ENCODE measurements at regions of chr9 and their contacts with region 1.

Region 1: GRCh38 chr9:2857564-2858198 is 13.8 kb upstream of the PUM3 start:
- DNase-seq: peak; percentile 66
- ATAC-seq: peak; percentile 97
- H3K4me3 ChIP-seq: no peak overlapping the region
- H3K27ac ChIP-seq: no peak overlapping the region
- H3K4me1 ChIP-seq: no peaks in the 10 kb centered on the region
- H3K27me3 ChIP-seq: peaks cover 13% of the 10 kb centered on the region
- CTCF ChIP-seq: peak; percentile 90
- POLR2A ChIP-seq: no peak
- RAD21 ChIP-seq: peak; percentile 77

Region 2: DNA sequence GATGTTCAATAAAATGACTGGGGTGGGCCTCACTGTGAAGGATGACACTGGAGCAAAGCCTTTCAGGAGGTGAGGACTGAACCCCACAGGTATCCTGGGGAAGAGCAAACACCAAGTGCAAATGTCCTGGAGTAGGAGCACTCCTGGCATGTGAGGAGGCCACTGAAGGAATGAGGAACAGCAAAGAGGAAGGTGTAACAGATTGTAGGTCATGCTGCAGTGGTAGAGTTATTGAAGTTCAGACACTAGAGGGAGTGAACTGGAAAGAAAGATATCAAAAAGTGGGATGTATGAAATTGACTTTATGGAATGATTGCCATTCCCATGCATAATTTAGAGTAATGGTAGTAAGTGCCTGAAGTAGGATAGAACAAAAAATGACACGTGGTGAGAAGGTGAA is 118.6 kb before region 1 on chr9:
- CTCF ChIA-PET with region 1: no interaction called
- POLR2A ChIA-PET with region 1: no interaction called
- dilution Hi-C with region 1: no loop called
- in situ Hi-C with region 1: no loop called
- intact Hi-C with region 1: no loop called
- DNase-seq: no peak
- ATAC-seq: no peak
- H3K4me3 ChIP-seq: no peak overlapping the region
- H3K27ac ChIP-seq: no peak overlapping the region
- H3K4me1 ChIP-seq: peaks cover 2% of the 10 kb centered on the region; the same call in 1 of the 2 replicates
- H3K27me3 ChIP-seq: no peaks in the 10 kb centered on the region
- CTCF ChIP-seq: no peak
- POLR2A ChIP-seq: no peak
- RAD21 ChIP-seq: no peak

Region 3: DNA sequence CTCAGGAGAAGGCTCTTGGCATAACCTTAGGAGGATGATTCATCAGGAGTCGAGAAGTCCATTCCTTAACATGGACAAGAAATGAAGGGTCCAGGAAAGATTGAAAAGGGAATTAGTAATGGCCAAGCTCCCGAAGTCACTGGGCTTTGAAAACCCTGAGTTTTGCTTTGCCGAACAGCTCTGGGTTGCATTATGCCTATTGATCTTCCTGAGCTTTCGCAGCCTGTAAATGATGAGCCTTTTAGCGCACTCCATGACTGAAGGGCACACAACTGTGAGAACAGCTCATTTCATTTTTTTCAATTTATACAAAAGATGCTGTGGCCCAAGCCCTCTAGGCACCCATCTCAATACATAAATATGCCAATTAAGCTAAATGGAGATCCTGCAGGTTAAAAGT is 11.2 kb after region 1 on chr9:
- CTCF ChIA-PET with region 1: interaction called, 10 read pairs
- POLR2A ChIA-PET with region 1: no interaction called
- dilution Hi-C with region 1: no loop called
- in situ Hi-C with region 1: no loop called
- intact Hi-C with region 1: no loop called
- DNase-seq: no peak
- ATAC-seq: no peak
- H3K4me3 ChIP-seq: no peak overlapping the region
- H3K27ac ChIP-seq: no peak overlapping the region
- H3K4me1 ChIP-seq: no peaks in the 10 kb centered on the region
- H3K27me3 ChIP-seq: peaks cover 39% of the 10 kb centered on the region
- CTCF ChIP-seq: no peak
- POLR2A ChIP-seq: no peak
- RAD21 ChIP-seq: no peak

Region 4: GRCh38 chr9:3136686-3137346 is 279.1 kb after region 1 on chr9:
- CTCF ChIA-PET with region 1: no interaction called
- POLR2A ChIA-PET with region 1: no interaction called
- dilution Hi-C with region 1: no loop called
- in situ Hi-C with region 1: no loop called
- intact Hi-C with region 1: no loop called
- DNase-seq: no peak
- ATAC-seq: no peak
- H3K4me3 ChIP-seq: no peak overlapping the region
- H3K27ac ChIP-seq: no peak overlapping the region
- H3K4me1 ChIP-seq: no peaks in the 10 kb centered on the region
- H3K27me3 ChIP-seq: no peaks in the 10 kb centered on the region
- CTCF ChIP-seq: no peak
- POLR2A ChIP-seq: no peak
- RAD21 ChIP-seq: no peak

Region 5: DNA sequence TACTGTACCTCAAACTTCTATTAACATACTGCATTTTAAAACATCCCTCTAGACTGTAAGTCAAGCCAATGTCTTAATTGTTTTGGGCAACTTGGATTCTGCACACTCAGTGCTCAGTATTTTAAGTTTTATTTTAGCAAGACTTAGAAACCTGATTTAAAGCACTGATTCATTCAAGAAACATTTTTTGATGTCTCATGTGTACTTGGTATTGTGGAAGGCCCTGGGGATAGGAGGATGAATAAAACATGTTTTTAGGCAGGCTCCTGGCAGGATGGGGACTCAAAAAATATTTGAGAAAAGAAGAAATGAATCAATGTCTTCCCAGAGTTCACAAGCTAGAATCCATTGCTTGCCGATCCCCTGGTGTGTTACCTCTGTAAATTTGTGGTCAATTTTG is 320.3 kb after region 1 on chr9:
- CTCF ChIA-PET with region 1: no interaction called
- POLR2A ChIA-PET with region 1: no interaction called
- dilution Hi-C with region 1: no loop called
- in situ Hi-C with region 1: no loop called
- intact Hi-C with region 1: loop called (anchors 5 kb)
- DNase-seq: no peak
- ATAC-seq: no peak
- H3K4me3 ChIP-seq: no peak overlapping the region
- H3K27ac ChIP-seq: no peak overlapping the region
- H3K4me1 ChIP-seq: no peaks in the 10 kb centered on the region
- H3K27me3 ChIP-seq: peaks cover 27% of the 10 kb centered on the region
- CTCF ChIP-seq: no peak
- POLR2A ChIP-seq: no peak
- RAD21 ChIP-seq: no peak

Region 6: DNA sequence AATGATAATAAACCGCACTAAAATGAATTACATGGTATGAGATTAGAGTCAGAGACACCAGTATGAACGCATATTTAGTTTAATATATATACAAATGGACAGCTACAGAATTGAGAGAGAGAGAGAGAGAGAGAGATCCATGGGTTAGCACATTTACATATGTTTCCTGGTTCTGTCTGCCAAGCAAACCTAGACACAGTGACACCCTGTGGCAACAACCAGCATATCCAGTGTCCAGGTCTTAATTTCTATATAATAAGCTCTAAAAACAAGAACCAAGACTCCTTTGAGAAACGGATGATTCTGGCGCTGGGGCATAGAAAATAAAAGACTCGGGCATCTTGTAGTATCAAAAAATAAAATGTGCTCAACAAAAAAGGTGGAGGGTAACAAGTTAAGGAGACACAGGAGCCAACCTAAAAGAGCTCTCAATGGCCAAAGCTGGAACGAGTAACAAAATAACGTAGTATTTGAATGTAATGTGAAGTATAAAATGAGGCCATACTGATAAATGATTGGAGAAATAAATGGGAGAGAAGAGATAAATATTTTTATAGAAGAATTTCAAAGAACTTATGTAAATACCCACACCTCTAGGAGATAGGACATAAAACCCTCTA is 583.6 kb after region 1 on chr9:
- CTCF ChIA-PET with region 1: interaction called, 3 read pairs
- POLR2A ChIA-PET with region 1: no interaction called
- dilution Hi-C with region 1: no loop called
- in situ Hi-C with region 1: loop called (anchors 10 kb)
- intact Hi-C with region 1: loop called (anchors 2 kb)
- DNase-seq: peak; percentile 77
- ATAC-seq: peak; percentile 91
- H3K4me3 ChIP-seq: no peak overlapping the region
- H3K27ac ChIP-seq: no peak overlapping the region
- H3K4me1 ChIP-seq: no peaks in the 10 kb centered on the region
- H3K27me3 ChIP-seq: no peaks in the 10 kb centered on the region
- CTCF ChIP-seq: peak; percentile 72
- POLR2A ChIP-seq: no peak
- RAD21 ChIP-seq: peak; percentile 73

Region 7: DNA sequence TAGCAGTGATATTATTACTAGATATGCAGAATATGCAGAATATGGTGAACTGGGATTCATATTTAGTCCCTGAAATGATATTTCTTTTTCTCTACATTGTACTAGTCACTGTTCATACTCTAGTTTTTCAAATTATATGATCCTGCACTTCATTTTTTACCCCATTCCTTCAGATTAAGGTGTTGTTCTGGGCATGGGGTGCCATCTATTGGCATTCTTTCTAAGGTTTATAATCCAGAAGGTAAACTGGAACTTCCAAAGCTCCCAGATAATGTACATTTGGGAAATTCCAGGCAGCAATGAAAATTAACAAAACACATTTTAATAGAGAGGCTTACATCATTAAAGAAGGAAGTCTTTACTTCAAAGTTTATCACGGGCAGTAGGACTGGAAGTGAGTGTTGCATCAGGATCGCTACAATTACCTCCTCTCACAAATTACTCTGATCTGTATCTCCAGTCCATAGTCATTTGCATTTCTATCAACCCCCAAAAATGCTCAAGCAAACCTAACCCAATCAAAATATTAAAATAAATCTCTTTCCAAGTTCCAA is 655.7 kb after region 1 on chr9:
- CTCF ChIA-PET with region 1: no interaction called
- POLR2A ChIA-PET with region 1: no interaction called
- dilution Hi-C with region 1: no loop called
- in situ Hi-C with region 1: no loop called
- intact Hi-C with region 1: loop called (anchors 5 kb)
- DNase-seq: no peak
- ATAC-seq: no peak
- H3K4me3 ChIP-seq: no peak overlapping the region
- H3K27ac ChIP-seq: no peak overlapping the region
- H3K4me1 ChIP-seq: peaks cover 4% of the 10 kb centered on the region; the same call in 1 of the 2 replicates
- H3K27me3 ChIP-seq: no peaks in the 10 kb centered on the region
- CTCF ChIP-seq: no peak
- POLR2A ChIP-seq: no peak
- RAD21 ChIP-seq: no peak

Region 8: GRCh38 chr9:4315582-4316215 is 1458.0 kb after region 1 on chr9:
- CTCF ChIA-PET with region 1: no interaction called
- POLR2A ChIA-PET with region 1: no interaction called
- dilution Hi-C with region 1: no loop called
- in situ Hi-C with region 1: no loop called
- intact Hi-C with region 1: loop called (anchors 1 kb)
- DNase-seq: peak; percentile 69
- ATAC-seq: peak; percentile 96
- H3K4me3 ChIP-seq: no peak overlapping the region
- H3K27ac ChIP-seq: no peak overlapping the region
- H3K4me1 ChIP-seq: peaks cover 4% of the 10 kb centered on the region; the same call in 1 of the 2 replicates
- H3K27me3 ChIP-seq: peaks cover 2% of the 10 kb centered on the region; the same call in 1 of the 2 replicates
- CTCF ChIP-seq: peak; percentile 93
- POLR2A ChIP-seq: no peak
- RAD21 ChIP-seq: peak; percentile 92

Region 9: DNA sequence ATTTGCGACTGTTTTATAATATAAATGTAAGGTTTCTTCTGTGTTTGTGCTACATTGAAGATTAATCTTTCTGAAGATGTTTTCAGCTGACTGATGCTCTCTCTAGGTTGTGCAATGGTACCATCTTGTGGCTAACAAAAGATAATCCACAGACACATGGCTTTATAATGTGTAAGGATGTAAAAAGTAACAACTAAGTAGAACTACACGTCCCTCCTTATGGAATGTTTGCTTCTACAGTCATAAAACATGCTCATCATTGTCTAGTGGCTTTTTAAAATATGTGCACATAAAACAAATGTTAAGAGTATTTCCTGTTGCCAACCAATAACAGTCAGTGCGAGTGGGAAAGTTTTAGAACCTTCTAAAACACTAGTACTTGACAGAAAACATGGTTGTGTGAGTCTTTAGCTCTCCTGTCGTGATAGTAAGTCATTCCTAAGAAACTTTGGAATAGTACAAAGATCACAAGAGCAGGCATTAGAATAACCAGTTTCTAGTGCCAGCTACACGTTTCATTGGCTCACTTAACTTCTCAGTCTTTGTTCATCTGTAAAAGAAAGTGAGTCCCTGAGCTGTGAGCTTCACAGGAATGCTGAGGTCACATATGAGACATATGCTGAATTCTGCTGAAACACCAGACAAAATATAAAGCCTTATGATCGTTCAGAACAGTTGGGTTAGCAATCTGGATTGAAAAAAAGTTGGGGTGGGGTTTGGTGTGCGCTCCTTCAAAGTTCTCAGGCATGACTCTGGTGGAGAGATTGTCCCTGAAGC is 1517.9 kb after region 1 on chr9:
- CTCF ChIA-PET with region 1: interaction called, 4 read pairs
- POLR2A ChIA-PET with region 1: no interaction called
- dilution Hi-C with region 1: no loop called
- in situ Hi-C with region 1: loop called (anchors 10 kb)
- intact Hi-C with region 1: loop called (anchors 1 kb)
- DNase-seq: peak; percentile 82
- ATAC-seq: peak; percentile 82
- H3K4me3 ChIP-seq: no peak overlapping the region
- H3K27ac ChIP-seq: no peak overlapping the region
- H3K4me1 ChIP-seq: no peaks in the 10 kb centered on the region
- H3K27me3 ChIP-seq: peaks cover 8% of the 10 kb centered on the region
- CTCF ChIP-seq: peak; percentile 84
- POLR2A ChIP-seq: no peak
- RAD21 ChIP-seq: peak; percentile 93